Ascending aorta (tissue), 2 donors: ENCODE measurements at regions of chr1 and their contacts with region 1.

Region 1: DNA sequence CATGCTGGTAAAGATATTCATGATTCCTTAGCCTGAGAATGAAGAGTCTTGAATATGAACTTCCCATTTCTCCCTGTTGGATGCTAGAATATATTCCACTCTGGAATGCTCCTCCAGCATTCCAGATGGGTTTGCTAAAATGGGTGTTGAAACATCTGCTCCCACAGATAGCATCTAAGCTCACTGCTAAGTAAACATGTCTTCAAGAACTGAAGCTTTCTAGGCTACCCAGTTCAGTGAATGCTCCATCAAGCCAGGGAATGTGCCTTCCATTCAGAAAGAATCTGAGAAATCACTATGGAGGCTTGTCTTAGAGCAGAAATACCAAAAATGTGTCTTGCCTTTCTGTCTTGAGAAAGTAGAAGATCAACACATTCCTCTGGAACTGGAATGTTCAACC is 81.1 kb downstream of the TNFSF18 start:
- DNase-seq: no peak
- H3K4me3 ChIP-seq: no peak overlapping the region
- H3K27ac ChIP-seq: no peak overlapping the region
- H3K4me1 ChIP-seq: peaks cover 0 to 7% of the 10 kb centered on the region in 2 donors
- H3K27me3 ChIP-seq: no peaks in the 10 kb centered on the region
- CTCF ChIP-seq: no peak

Region 2: DNA sequence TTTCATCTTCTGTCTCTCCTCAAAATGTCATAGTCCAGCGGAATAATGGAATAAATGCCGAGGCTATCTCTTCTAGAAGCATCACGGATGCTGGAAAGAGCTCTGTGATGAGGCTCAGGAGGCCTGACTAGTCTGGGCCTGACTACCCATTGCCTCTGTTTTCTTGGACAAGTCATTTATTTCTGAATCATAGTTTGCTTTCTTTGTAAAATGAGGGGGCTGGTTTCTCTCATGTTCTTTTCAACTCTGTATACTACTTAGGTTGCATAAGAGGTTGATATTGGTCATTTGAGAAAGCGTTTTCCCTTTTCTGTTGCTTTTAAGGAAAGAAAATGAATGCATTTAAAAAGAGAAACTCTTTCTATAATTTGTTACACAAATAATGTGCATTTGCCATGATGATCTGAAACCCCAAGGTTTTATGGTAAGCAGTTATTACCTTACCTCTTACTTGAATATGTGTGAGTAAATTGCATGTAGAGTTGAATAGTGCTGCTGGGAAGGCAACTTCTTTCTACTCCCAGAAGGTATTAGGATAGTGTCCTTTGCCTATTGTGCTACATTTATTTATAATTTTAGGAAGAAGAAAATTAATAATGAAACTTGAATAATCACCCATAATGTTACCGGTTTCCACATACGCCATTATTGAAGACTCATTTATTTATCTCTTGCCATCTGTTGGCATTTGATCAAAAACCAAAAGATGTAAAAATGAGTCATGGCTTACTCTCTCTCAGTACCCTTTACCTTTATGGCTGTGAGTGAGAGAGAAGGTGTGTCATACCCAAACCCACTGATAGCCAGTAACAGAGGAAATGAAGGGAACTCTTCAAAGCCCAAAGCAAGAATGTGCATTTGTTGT is 131.6 kb before region 1 on chr1:
- intact Hi-C with region 1: loop called (anchors 10 kb)
- DNase-seq: no peak
- H3K4me3 ChIP-seq: no peak overlapping the region
- H3K27ac ChIP-seq: no peak overlapping the region
- H3K4me1 ChIP-seq: no peaks in the 10 kb centered on the region
- H3K27me3 ChIP-seq: no peaks in the 10 kb centered on the region
- CTCF ChIP-seq: no peak